Activated CD4-positive, alpha-beta T cell treated with anti-CD3 and anti-CD28 coated beads for 36 hours (primary cell): ENCODE measurements at regions of chr16 and their contacts with region 1.

Region 1: GRCh38 chr16:51500306-51500705 is 349.2 kb upstream of the SALL1 start:
- DNase-seq: no peak
- ATAC-seq: no peak
- H3K4me3 Mint-ChIP-seq: no peak overlapping the region
- H3K27ac Mint-ChIP-seq: no peak overlapping the region
- H3K4me1 Mint-ChIP-seq: no peaks in the 10 kb centered on the region
- H3K27me3 Mint-ChIP-seq: no peaks in the 10 kb centered on the region

Region 2: DNA sequence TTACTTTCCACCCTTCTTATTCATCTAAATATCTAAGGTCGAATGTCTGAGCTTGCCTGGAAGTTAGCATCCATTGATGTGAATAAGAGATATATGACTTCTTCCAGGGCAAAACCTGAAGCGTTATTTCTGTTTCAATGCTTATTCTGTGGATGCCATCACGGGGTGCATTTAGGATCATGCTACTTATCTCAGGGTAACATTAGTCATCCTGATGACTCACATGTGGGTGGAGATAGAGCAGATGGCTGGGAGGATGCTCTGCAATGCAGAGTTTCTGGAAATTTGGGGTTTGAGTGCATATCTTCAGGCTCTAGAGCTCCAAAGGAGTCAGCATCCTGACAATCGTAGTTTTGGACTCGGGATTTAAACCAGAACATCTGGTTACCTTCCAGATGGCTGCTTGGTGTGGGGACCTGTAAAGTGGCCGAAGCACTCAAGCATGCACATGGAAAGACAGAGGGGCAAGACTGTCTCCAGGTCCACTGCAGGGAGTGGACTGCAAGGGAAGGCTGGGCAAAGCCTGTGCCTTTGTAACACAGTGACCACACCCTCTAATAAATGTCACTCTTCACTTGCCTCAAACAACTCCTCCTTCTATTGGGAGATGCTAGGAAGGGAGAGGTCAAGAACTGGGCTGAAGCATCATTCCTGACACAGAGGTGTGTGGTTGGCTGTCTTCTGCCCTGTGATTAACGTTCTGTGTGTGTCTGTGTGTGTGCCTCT is 174.0 kb before region 1 on chr16:
- CTCF ChIA-PET with region 1: no interaction called
- POLR2A ChIA-PET with region 1: no interaction called
- intact Hi-C with region 1: no loop called
- DNase-seq: no peak
- ATAC-seq: no peak
- H3K4me3 Mint-ChIP-seq: no peak overlapping the region
- H3K27ac Mint-ChIP-seq: no peak overlapping the region
- H3K4me1 Mint-ChIP-seq: no peaks in the 10 kb centered on the region
- H3K27me3 Mint-ChIP-seq: no peaks in the 10 kb centered on the region

Region 3: DNA sequence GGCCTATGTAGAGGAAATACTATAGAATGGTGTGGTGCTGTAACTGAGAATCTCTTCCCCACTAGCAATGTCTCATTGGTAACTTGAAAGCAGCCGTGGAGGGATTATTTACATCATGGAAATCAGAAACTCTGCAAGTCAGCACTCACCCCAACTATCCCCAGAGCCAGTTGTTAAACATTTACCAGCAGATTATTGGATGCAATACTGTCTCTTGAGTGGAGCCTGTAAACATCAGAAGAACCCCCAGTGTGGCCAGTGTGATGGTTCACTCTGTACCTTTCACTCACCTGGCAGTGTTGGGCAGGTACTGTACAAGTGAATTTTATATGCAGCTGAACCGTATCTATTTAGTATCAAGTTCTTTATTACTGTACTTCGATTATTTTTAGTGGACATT is 49.4 kb before region 1 on chr16:
- CTCF ChIA-PET with region 1: no interaction called
- POLR2A ChIA-PET with region 1: no interaction called
- intact Hi-C with region 1: no loop called
- DNase-seq: no peak
- ATAC-seq: no peak
- H3K4me3 Mint-ChIP-seq: no peak overlapping the region
- H3K27ac Mint-ChIP-seq: no peak overlapping the region
- H3K4me1 Mint-ChIP-seq: no peaks in the 10 kb centered on the region
- H3K27me3 Mint-ChIP-seq: no peaks in the 10 kb centered on the region

Region 4: GRCh38 chr16:51559901-51560300 is 59.6 kb after region 1 on chr16:
- CTCF ChIA-PET with region 1: no interaction called
- POLR2A ChIA-PET with region 1: no interaction called
- intact Hi-C with region 1: loop called in 1 of 2 experiments (anchors 2 kb)
- DNase-seq: no peak
- ATAC-seq: no peak
- H3K4me3 Mint-ChIP-seq: no peak overlapping the region
- H3K27ac Mint-ChIP-seq: no peak overlapping the region
- H3K4me1 Mint-ChIP-seq: no peaks in the 10 kb centered on the region
- H3K27me3 Mint-ChIP-seq: no peaks in the 10 kb centered on the region

Region 5: DNA sequence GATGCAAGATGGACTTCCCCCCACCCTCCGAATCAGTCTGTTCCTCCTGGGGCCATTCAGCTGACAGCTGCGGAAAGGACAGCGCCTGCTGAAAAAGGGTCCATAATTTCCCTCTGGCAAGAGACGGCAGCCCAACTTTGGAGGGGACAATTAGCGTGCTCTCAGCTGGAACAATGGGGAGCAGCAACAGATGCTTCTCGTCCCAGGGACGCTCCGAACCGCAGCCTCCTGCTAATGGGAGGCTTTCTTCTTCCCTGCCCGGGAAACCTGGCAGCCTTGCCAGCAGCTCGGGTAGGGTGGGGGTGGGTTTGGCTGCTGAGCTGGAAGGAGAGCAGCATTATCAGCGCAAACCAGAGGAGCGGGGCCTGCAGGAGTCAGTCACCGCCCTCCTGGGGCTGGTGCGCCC is 150.8 kb after region 1 on chr16:
- CTCF ChIA-PET with region 1: no interaction called
- POLR2A ChIA-PET with region 1: no interaction called
- intact Hi-C with region 1: no loop called
- DNase-seq: no peak
- ATAC-seq: no peak
- H3K4me3 Mint-ChIP-seq: no peak overlapping the region
- H3K27ac Mint-ChIP-seq: no peak overlapping the region
- H3K4me1 Mint-ChIP-seq: no peaks in the 10 kb centered on the region
- H3K27me3 Mint-ChIP-seq: no peaks in the 10 kb centered on the region